ENCODE measurements at regions of chr9 and their contacts with region 1.

Region 1: GRCh38 chr9:132800038-132800648 is 77.9 kb downstream of the AK8 start:
- DNase-seq: peak; percentile 76 to 81
- H3K4me3 ChIP-seq: no peak overlapping the region
- H3K27ac ChIP-seq: no peak overlapping the region
- H3K4me1 ChIP-seq: peaks cover 5% of the 10 kb centered on the region
- H3K27me3 ChIP-seq: no peaks in the 10 kb centered on the region
- CTCF ChIP-seq: peak; percentile 84 to 91 (median 86)
- POLR2A ChIP-seq: no peak

Region 2: DNA sequence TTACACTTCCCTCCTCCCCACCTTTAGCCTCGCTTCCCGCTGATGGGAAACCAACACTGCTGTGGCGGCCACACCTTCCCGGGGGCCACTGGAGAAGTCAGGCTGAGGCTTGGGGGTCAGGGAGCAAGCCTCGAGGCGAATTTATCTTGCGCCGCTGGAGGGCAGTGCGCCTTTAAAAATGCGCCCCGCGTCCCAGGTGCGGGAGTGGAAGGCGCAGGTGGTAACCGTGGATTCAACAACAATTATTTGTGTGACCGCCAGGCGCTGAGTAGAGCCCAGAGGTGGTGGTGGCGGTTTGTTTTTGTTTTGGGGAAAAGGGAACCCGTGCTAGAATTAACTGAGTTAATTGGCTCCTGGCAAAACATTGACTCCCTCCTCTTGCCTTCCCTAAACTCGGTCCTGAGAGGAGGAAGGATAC is 389.0 kb before region 1 on chr9:
- intact Hi-C with region 1: loop called (anchors 10 kb)
- DNase-seq: no peak
- H3K4me3 ChIP-seq: peak overlapping the region; percentile 46 to 50
- H3K27ac ChIP-seq: no peak overlapping the region
- H3K4me1 ChIP-seq: peaks cover 32% of the 10 kb centered on the region
- H3K27me3 ChIP-seq: peaks cover 7% of the 10 kb centered on the region
- CTCF ChIP-seq: peak; percentile 15 to 46 (median 41)
- POLR2A ChIP-seq: no peak

Region 3: DNA sequence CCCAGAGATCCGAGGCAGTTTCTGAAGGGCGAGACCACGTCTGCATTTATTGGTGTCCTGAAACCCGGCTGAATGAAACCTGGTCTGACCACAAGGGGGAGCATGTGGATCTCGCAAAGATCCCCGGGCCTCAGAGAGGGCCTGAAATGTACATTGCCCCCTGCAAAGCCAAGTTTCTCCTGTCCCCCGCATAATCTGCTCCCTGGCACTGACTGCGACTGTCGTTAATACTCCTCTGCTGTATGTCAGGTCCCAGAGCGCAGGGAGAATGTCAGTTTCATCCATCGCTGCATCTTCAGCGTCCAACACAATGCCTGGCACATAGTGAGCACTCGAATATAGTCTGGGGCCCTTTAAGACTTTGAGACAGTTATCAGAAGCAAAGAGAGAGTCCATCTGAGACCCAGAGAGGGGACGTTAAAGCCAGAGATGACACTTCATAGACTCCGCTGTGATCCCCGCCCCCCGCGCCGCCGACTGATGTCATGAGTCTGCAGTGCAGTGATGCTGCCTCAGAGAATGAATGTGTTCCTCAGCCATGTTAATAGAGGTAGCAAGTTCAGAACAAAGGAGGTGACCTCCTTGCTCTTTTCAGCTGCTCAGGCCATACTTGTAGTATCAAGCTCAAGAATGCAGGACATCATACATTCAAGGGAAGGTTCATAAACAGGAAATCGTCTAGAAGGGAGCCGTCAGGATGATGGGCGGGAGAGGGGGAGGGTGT is 292.2 kb before region 1 on chr9:
- intact Hi-C with region 1: loop called (anchors 5 kb)
- DNase-seq: no peak
- H3K4me3 ChIP-seq: no peak overlapping the region
- H3K27ac ChIP-seq: no peak overlapping the region
- H3K4me1 ChIP-seq: no peaks in the 10 kb centered on the region
- H3K27me3 ChIP-seq: no peaks in the 10 kb centered on the region
- CTCF ChIP-seq: peak; percentile 35 to 62 (median 57)
- POLR2A ChIP-seq: no peak

Measured in vagina (tissue), 2 donors.